AG04449 (cell line): ENCODE measurements at regions of chr5 and their contacts with region 1.

Region 1: GRCh38 chr5:145347026-145347616 is 488.0 kb downstream of the PRELID2 start:
- DNase-seq: no peak
- H3K4me3 ChIP-seq: no peak overlapping the region
- CTCF ChIP-seq: peak; percentile 62

Region 2: DNA sequence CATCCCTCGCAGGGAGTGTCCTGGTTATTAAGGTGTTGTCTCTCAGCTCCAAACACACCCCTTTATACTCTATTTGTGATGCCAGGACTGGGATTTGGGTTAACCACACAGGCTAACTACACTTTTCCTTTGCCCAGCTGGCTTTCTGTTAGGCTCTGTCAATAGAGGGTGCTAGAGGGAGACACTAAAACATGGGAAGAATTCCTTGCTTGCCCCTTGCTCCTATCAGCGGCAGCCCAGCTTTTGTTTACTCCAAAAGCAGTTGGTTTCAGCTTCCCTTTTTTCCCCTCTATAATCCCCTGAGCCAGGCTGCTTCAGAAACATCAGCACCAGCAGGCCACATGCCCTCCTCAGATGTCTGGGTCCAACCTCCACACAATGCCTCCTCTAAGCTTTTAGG is 879.3 kb before region 1 on chr5:
- CTCF ChIA-PET with region 1: interaction called, 10 read pairs
- POLR2A ChIA-PET with region 1: no interaction called
- DNase-seq: no peak
- H3K4me3 ChIP-seq: no peak overlapping the region
- CTCF ChIP-seq: peak; percentile 76

Region 3: GRCh38 chr5:145324767-145325480 is 22.2 kb before region 1 on chr5:
- CTCF ChIA-PET with region 1: interaction called, 11 read pairs
- POLR2A ChIA-PET with region 1: no interaction called
- DNase-seq: no peak
- H3K4me3 ChIP-seq: no peak overlapping the region
- CTCF ChIP-seq: no peak

Region 4: DNA sequence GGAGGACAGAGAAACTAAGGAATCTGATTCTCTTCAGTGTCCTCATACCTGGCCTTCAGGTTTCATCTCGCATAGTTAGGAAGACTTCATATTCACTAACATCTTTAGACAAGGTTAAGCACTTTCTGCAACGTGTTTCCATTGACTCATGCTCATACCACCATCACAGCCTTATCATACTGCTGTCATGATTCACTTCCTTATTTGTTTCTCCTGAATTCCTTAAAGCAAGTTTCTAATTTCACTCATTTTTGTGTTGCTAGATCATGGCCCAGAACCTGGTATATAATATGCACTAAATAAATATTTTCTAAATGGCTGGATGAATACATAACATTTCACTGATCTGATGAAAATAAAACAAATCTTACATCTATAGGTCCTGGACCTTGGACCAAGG is 15.1 kb after region 1 on chr5:
- CTCF ChIA-PET with region 1: interaction called, 10 read pairs
- POLR2A ChIA-PET with region 1: no interaction called
- DNase-seq: peak; percentile 70
- H3K4me3 ChIP-seq: no peak overlapping the region
- CTCF ChIP-seq: no peak